ENCODE measurements at regions of chr6 and their contacts with region 1.

Region 1: GRCh38 chr6:2853761-2854395 is 12.2 kb upstream of the SERPINB1 start:
- DNase-seq: peak in 5 of 9 donors; percentile 23 to 70 (median 40)
- ATAC-seq: peak; percentile 61
- H3K4me3 ChIP-seq: peak overlapping the region; percentile 53
- H3K4me3 Mint-ChIP-seq: peak overlapping the region; percentile 65 to 97 (median 78)
- H3K27ac ChIP-seq: peak overlapping the region; percentile 65
- H3K27ac Mint-ChIP-seq: peak overlapping the region; percentile 79 to 100 (median 98)
- H3K4me1 ChIP-seq: peaks cover 59 to 61% of the 10 kb centered on the region in 2 donors
- H3K4me1 Mint-ChIP-seq: peaks cover 42 to 74% (median 71%) of the 10 kb centered on the region in 7 donors
- H3K27me3 ChIP-seq: no peaks in the 10 kb centered on the region
- H3K27me3 Mint-ChIP-seq: no peaks in the 10 kb centered on the region

Region 2: DNA sequence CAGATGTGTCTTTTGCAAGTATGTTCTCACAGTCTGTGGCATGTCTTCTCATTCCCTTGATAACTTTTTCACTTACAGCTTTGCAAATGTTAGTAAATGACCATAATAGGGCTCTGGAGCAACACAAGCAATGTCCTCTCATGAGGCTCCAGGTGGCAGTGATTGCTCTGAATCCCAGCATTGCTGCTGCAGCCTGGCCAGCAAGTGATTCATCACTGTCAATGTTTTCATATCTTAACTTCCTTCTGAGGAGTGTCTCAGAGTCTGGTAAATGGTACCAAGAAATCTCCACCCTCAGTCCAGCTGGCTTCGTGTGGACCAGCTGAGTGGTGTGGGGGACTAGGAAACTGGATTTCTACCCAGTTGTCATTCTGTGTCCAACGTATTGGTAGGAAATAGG is 242.8 kb before region 1 on chr6:
- CTCF ChIA-PET with region 1: no interaction called
- POLR2A ChIA-PET with region 1: no interaction called
- intact Hi-C with region 1: no loop called
- DNase-seq: no peak
- ATAC-seq: no peak
- H3K4me3 ChIP-seq: no peak overlapping the region
- H3K4me3 Mint-ChIP-seq: no peak overlapping the region
- H3K27ac ChIP-seq: no peak overlapping the region
- H3K27ac Mint-ChIP-seq: no peak overlapping the region
- H3K4me1 ChIP-seq: no peaks in the 10 kb centered on the region
- H3K4me1 Mint-ChIP-seq: no peaks in the 10 kb centered on the region
- H3K27me3 ChIP-seq: no peaks in the 10 kb centered on the region
- H3K27me3 Mint-ChIP-seq: peaks cover 19 to 38% (median 31%) of the 10 kb centered on the region in 5 donors

Region 3: DNA sequence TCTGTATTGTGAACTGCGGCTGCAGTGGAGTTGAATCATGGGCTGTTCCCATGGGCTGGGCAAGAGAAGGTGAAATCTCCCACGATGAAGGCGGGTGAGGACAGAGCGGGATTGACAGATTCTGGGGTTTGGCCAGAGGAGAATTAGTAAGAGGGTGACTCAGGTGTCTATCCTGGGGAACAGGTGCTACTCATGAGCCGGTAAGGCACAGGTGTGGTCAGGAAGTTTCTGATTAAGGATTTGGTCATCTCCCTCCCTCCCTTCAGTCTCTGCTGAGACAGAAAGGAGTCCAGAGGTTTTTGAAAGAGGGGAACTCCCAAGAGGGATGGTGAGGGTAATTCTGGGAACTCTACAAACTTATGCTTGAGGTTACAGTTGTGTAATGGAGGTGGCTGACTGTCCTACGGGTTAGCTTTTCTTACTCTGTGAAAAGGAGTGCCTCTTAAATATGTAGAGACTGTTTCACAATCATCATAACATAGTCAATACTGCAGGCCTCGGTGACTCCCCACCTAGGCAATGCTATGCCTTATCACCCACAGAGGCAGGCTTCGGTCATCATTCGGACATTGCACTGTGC is 43.7 kb before region 1 on chr6:
- CTCF ChIA-PET with region 1: no interaction called
- POLR2A ChIA-PET with region 1: no interaction called
- intact Hi-C with region 1: no loop called
- DNase-seq: no peak
- ATAC-seq: peak; percentile 42
- H3K4me3 ChIP-seq: no peak overlapping the region
- H3K4me3 Mint-ChIP-seq: peak overlapping the region in 1 of 10 donors; percentile 5
- H3K27ac ChIP-seq: no peak overlapping the region
- H3K27ac Mint-ChIP-seq: no peak overlapping the region
- H3K4me1 ChIP-seq: no peaks in the 10 kb centered on the region
- H3K4me1 Mint-ChIP-seq: peaks cover 0 to 21% (median 5%) of the 10 kb centered on the region in 7 donors
- H3K27me3 ChIP-seq: no peaks in the 10 kb centered on the region
- H3K27me3 Mint-ChIP-seq: no peaks in the 10 kb centered on the region

Region 4: DNA sequence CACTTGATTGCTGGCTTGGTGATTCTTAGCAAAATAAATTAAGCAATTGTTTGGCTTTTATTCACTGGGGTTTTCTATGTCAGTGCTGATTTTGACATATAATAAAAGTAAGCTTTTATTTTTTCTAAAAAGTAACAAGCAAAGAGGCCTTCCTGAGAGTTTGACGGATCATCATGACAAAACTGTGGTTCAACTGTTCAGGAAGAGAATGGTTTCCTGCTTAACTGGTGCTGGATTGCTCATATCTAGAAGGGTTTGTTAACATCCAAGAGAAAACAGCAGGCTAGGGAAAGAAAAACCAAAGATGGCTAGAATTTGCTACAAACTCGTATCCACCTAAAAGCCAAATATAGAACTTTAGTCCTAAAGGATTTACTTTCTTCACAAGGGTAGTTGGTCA is 33.5 kb before region 1 on chr6:
- CTCF ChIA-PET with region 1: no interaction called
- POLR2A ChIA-PET with region 1: no interaction called
- intact Hi-C with region 1: no loop called
- DNase-seq: no peak
- ATAC-seq: no peak
- H3K4me3 ChIP-seq: no peak overlapping the region
- H3K4me3 Mint-ChIP-seq: peak overlapping the region in 1 of 10 donors; percentile 6
- H3K27ac ChIP-seq: no peak overlapping the region
- H3K27ac Mint-ChIP-seq: no peak overlapping the region
- H3K4me1 ChIP-seq: peaks cover 0 to 5% of the 10 kb centered on the region in 2 donors
- H3K4me1 Mint-ChIP-seq: peaks cover 12 to 42% (median 34%) of the 10 kb centered on the region in 7 donors
- H3K27me3 ChIP-seq: no peaks in the 10 kb centered on the region
- H3K27me3 Mint-ChIP-seq: no peaks in the 10 kb centered on the region

Region 5: DNA sequence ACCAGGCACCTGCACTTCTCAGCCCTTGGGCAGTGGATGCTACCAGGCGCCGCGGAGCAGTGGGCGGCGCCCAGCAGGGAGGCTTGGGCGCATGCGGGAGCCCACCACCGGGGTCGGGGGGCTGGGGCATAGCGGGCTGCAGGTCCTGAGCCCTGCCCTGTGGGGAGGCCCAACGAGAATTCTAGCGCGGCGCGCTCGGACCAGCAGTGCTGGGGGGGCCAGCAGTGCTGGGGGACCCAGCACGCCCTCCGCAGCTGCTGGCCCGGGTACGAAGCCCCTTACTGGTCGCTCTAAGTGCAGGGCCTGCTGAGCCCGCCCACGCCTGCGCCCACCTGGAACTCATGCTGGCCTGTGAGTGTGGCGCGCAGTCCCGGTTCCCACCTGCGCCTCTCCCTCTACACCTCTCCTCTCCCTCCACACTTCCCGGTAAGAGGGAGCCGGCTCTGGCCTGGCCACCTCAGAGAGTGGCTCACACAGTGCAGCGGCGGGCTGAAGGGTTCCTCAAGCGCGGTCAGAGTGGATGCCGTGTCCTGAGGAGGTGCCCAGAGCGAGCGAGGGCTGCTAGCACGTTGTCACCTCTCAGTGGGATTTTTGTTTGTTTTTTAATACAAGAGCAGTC is 16.3 kb after region 1 on chr6:
- CTCF ChIA-PET with region 1: interaction called, 57 read pairs
- POLR2A ChIA-PET with region 1: interaction called, 27 read pairs
- intact Hi-C with region 1: loop called in 1 of 2 experiments (anchors 1 kb)
- DNase-seq: no peak
- ATAC-seq: no peak
- H3K4me3 ChIP-seq: no peak overlapping the region
- H3K4me3 Mint-ChIP-seq: no peak overlapping the region
- H3K27ac ChIP-seq: no peak overlapping the region
- H3K27ac Mint-ChIP-seq: no peak overlapping the region
- H3K4me1 ChIP-seq: peaks cover 7 to 11% of the 10 kb centered on the region in 2 donors
- H3K4me1 Mint-ChIP-seq: peaks cover 16 to 60% (median 47%) of the 10 kb centered on the region in 7 donors
- H3K27me3 ChIP-seq: no peaks in the 10 kb centered on the region
- H3K27me3 Mint-ChIP-seq: no peaks in the 10 kb centered on the region

Region 6: GRCh38 chr6:2876210-2877056 is 22.6 kb after region 1 on chr6:
- CTCF ChIA-PET with region 1: interaction called, 57 read pairs
- POLR2A ChIA-PET with region 1: interaction called, 7 read pairs
- intact Hi-C with region 1: loop called (anchors 1 kb)
- DNase-seq: no peak
- ATAC-seq: peak; percentile 38
- H3K4me3 ChIP-seq: peak overlapping the region; percentile 50
- H3K4me3 Mint-ChIP-seq: peak overlapping the region; percentile 79 to 87 (median 84)
- H3K27ac ChIP-seq: peak overlapping the region; percentile 71
- H3K27ac Mint-ChIP-seq: peak overlapping the region; percentile 82 to 98 (median 91)
- H3K4me1 ChIP-seq: peaks cover 54 to 55% of the 10 kb centered on the region in 2 donors
- H3K4me1 Mint-ChIP-seq: peaks cover 63 to 83% (median 79%) of the 10 kb centered on the region in 7 donors
- H3K27me3 ChIP-seq: no peaks in the 10 kb centered on the region
- H3K27me3 Mint-ChIP-seq: no peaks in the 10 kb centered on the region

Region 7: DNA sequence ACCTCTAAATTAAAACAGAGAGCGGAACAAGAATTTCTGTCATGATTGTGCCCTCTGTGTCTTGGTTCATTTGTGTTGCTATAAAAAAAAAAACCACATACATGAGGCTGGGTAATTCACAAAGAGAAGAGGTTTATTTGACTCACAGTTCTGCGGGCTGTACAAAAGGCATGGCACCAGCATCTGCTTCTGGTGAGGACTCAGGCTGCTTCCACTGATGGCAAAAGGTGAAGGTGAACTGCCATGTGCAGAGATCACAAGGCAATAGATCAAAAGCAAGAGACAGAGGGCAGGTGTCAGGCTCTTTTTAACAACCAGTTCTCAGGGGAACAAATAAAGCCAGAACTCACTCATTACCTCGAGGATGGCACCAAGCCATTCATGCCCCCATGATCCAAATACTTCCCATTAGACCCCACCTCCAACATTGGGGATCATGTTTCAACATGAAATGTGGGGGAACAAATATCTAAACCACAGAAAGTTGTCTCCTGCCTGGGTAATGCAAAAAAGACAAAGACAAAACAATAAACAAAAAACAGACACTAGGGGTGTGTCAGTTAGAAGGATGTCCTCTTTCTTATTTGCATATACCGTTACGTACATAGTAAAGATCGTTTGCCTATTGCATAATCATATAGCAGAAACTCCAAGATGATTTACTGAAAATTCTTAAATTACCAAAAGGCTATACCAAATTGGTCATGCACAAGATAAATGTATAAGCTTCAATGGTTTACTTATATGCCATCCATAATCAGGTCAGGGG is 32.3 kb after region 1 on chr6:
- CTCF ChIA-PET with region 1: interaction called, 57 read pairs
- POLR2A ChIA-PET with region 1: interaction called, 23 read pairs
- intact Hi-C with region 1: loop called in 1 of 2 experiments (anchors 1 kb)
- DNase-seq: no peak
- ATAC-seq: peak; percentile 58
- H3K4me3 ChIP-seq: no peak overlapping the region
- H3K4me3 Mint-ChIP-seq: peak overlapping the region in 5 of 10 donors; percentile 0 to 28 (median 16)
- H3K27ac ChIP-seq: peak overlapping the region; percentile 23
- H3K27ac Mint-ChIP-seq: peak overlapping the region in 8 of 9 donors; percentile 39 to 90 (median 70)
- H3K4me1 ChIP-seq: peaks cover 3 to 24% of the 10 kb centered on the region in 2 donors
- H3K4me1 Mint-ChIP-seq: peaks cover 30 to 85% (median 74%) of the 10 kb centered on the region in 7 donors
- H3K27me3 ChIP-seq: no peaks in the 10 kb centered on the region
- H3K27me3 Mint-ChIP-seq: no peaks in the 10 kb centered on the region

Region 8: DNA sequence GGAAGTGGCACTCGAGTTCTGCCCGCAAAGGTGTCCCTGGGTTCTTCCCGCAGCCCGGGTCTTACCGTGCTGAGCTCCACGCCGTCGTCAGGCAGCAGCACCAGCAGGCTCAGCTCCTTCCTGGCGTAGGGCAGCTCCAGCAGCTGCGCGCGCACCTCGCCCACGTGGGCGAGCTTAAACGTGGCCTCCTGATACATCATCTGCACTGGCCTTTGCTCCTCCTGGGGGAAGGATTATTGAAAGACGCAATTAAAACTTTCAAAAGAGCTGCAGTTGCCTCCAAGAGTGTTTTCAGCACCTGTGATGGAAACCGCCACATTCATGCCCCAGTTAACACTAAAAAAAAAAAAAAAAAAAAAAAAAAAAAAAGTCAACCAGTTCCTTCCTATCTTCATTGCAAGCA is 37.9 kb after region 1 on chr6:
- CTCF ChIA-PET with region 1: interaction called, 3 read pairs
- POLR2A ChIA-PET with region 1: interaction called, 27 read pairs
- intact Hi-C with region 1: loop called in 1 of 2 experiments (anchors 1 kb)
- DNase-seq: peak in 8 of 9 donors; percentile 31 to 93 (median 79)
- ATAC-seq: peak; percentile 88
- H3K4me3 ChIP-seq: peak overlapping the region; percentile 34
- H3K4me3 Mint-ChIP-seq: peak overlapping the region; percentile 58 to 81 (median 69)
- H3K27ac ChIP-seq: peak overlapping the region; percentile 69
- H3K27ac Mint-ChIP-seq: peak overlapping the region; percentile 13 to 96 (median 90)
- H3K4me1 ChIP-seq: peaks cover 0 to 18% of the 10 kb centered on the region in 2 donors
- H3K4me1 Mint-ChIP-seq: peaks cover 22 to 80% (median 68%) of the 10 kb centered on the region in 7 donors
- H3K27me3 ChIP-seq: no peaks in the 10 kb centered on the region
- H3K27me3 Mint-ChIP-seq: no peaks in the 10 kb centered on the region

Region 9: GRCh38 chr6:2900821-2901644 is 47.2 kb after region 1 on chr6:
- CTCF ChIA-PET with region 1: interaction called, 5 read pairs
- POLR2A ChIA-PET with region 1: interaction called, 71 read pairs
- intact Hi-C with region 1: loop called in 1 of 2 experiments (anchors 1 kb)
- DNase-seq: no peak
- ATAC-seq: no peak
- H3K4me3 ChIP-seq: peak overlapping the region; percentile 85
- H3K4me3 Mint-ChIP-seq: peak overlapping the region; percentile 96 to 100 (median 99)
- H3K27ac ChIP-seq: peak overlapping the region; percentile 90
- H3K27ac Mint-ChIP-seq: peak overlapping the region; percentile 88 to 98 (median 97)
- H3K4me1 ChIP-seq: peaks cover 29 to 33% of the 10 kb centered on the region in 2 donors
- H3K4me1 Mint-ChIP-seq: peaks cover 54 to 71% (median 66%) of the 10 kb centered on the region in 7 donors
- H3K27me3 ChIP-seq: no peaks in the 10 kb centered on the region
- H3K27me3 Mint-ChIP-seq: peaks cover 0 to 4% (median 0%) of the 10 kb centered on the region in 5 donors